Posterior cingulate gyrus (tissue), 11 donors: ENCODE measurements at regions of chr1 and their contacts with region 1.

Region 1: DNA sequence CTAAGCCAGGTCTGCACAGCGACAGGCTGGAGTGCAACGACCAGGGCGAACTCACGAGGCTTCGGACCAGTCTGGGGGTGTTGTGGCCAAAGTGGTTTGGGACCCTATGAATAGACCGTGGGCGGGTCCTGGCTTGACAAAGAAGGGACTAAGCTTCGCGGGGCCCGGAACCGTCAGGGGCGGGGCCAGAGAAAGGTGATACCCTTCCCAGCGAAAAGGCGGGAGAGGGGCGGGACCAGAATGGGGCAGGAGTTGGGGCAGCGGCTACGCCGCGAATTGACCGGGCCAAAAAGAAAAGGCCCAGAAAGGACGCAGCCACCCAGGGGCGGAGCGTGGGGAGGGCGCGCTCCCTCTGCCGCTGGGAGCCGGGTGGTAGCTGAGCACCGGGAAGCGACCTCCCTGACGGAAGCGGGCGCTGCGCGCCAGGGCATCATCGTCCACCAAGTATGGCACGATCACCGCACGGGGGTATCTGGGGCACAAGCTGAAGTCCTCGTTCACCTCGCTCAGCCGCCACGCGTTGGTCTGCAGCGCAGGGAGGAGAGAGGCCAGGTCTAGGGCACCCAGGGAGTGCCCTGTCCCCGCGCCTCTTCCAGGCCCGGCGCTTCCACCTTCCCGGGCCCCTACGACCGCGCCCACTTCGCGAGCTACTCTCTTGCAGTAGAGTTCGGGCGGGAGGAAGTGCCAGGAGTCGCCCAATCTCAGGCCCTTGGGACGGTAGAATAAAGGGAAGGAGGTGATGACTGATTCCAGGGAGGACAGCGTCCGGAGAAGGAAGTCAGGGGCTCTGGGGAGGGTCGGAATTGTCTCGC is 6.7 kb upstream of the FAM167B start:
- DNase-seq: peak; percentile 56 to 96 (median 68)

Region 2: GRCh38 chr1:32335790-32336590 is 95.6 kb after region 1 on chr1 and contains the start of gene MARCKSL1:
- intact Hi-C with region 1: loop called (anchors 5 kb)
- DNase-seq: peak; percentile 78 to 98 (median 87)